PC-9 (cell line): ENCODE measurements at regions of chr7 and their contacts with region 1.

Region 1: DNA sequence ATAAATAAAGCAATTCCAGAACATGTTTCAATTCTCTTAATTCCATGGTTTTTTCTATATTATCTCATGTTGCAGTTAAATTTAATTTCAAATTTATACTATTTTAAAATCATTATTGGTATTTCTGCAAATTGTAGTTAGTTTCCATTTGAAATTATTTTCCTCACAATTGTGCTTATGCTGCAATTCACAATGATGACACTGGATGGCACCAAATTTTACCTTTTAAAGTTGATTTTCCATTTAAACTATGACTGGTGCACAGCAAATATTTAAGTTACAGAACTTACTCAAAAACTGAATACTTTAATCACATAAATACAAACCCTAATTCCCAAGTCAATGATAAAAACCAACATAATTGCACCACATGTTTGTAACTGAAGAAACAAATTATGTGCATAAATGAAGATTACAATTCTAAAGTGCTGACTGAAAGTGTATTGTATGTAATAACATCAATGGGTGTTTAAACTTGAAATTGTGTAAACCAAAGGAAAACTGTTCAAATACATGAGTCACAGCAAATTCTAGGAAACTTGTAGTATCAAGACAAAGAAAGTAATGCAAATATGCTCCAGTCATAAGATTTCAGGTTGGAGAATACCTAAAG is 75.3 kb upstream of the AASS start:
- DNase-seq: no peak
- H3K4me3 ChIP-seq: no peak overlapping the region
- H3K27ac ChIP-seq: no peak overlapping the region
- H3K4me1 ChIP-seq: no peaks in the 10 kb centered on the region
- H3K27me3 ChIP-seq: no peaks in the 10 kb centered on the region
- CTCF ChIP-seq: peak; percentile 85

Region 2: GRCh38 chr7:122014697-122015096 is 204.7 kb before region 1 on chr7:
- CTCF ChIA-PET with region 1: no interaction called
- POLR2A ChIA-PET with region 1: no interaction called
- intact Hi-C with region 1: loop called (anchors 2 kb)
- DNase-seq: no peak
- H3K4me3 ChIP-seq: no peak overlapping the region
- H3K27ac ChIP-seq: no peak overlapping the region
- H3K4me1 ChIP-seq: no peaks in the 10 kb centered on the region
- H3K27me3 ChIP-seq: no peaks in the 10 kb centered on the region
- CTCF ChIP-seq: peak; percentile 61

Region 3: DNA sequence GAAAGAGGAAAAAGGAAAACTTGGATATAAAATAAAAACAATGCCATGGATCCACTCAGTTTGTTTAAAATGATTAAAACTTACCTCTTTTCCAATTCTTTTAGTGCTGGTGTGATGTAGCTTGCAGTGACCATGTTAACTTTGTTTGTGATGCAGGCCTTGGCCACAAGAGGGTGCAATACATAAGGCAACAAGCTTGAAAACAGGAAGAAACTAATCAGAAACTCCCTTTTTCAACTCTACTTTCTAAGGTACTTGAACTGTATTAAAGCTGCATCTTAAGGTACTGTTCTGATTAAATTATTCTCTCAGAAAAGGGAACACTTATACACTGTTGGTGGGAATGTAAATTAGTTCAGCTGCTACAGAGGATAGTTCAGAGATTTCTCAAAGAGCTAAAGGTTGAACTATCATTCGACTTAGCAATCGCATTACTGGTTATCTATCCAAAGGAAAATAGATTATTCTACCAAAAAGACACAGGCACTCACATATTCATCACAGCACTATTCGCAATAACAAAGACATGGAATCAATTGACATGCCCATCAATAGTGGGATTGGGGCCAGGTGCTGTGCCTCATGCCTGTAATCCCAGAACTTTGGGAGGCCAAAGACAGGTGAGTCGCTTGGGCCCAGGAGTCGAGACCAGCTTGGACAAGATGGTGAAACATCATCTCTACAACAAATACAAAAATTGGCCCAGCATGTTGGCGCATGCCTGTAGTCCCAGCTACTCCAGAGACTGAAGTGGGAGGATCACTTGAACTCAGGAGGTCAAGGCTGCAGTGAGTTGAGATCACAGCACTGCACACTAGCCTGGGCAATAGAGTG is 126.2 kb before region 1 on chr7:
- CTCF ChIA-PET with region 1: interaction called, 4 read pairs
- POLR2A ChIA-PET with region 1: no interaction called
- intact Hi-C with region 1: loop called (anchors 2 kb)
- DNase-seq: peak; percentile 42 to 62
- H3K4me3 ChIP-seq: no peak overlapping the region
- H3K27ac ChIP-seq: no peak overlapping the region
- H3K4me1 ChIP-seq: no peaks in the 10 kb centered on the region
- H3K27me3 ChIP-seq: no peaks in the 10 kb centered on the region
- CTCF ChIP-seq: peak; percentile 83

Region 4: DNA sequence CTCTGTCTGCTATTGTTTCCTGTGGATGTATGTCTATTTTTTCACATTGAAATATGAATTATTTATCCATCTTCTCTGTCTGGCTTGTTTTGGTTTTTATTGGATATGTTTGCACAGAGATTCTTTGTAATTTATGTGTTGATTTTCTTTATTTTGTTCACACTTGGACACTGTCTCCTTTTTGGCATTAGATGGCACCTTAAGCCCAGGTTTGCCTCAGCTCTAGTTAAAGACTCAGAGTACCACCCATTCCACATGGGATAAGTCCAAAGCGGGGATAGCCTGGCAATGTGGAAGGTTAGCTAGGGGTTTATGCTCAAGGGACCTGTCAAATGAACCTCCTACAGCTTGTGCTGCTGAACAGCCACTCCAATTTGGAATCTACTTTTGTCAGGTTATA is 71.1 kb after region 1 on chr7:
- CTCF ChIA-PET with region 1: no interaction called
- POLR2A ChIA-PET with region 1: no interaction called
- intact Hi-C with region 1: no loop called
- DNase-seq: no peak
- H3K4me3 ChIP-seq: no peak overlapping the region
- H3K27ac ChIP-seq: no peak overlapping the region
- H3K4me1 ChIP-seq: no peaks in the 10 kb centered on the region
- H3K27me3 ChIP-seq: no peaks in the 10 kb centered on the region
- CTCF ChIP-seq: no peak